Ascending aorta (tissue), 2 donors: ENCODE measurements at regions of chr2 and their contacts with region 1.

Region 1: DNA sequence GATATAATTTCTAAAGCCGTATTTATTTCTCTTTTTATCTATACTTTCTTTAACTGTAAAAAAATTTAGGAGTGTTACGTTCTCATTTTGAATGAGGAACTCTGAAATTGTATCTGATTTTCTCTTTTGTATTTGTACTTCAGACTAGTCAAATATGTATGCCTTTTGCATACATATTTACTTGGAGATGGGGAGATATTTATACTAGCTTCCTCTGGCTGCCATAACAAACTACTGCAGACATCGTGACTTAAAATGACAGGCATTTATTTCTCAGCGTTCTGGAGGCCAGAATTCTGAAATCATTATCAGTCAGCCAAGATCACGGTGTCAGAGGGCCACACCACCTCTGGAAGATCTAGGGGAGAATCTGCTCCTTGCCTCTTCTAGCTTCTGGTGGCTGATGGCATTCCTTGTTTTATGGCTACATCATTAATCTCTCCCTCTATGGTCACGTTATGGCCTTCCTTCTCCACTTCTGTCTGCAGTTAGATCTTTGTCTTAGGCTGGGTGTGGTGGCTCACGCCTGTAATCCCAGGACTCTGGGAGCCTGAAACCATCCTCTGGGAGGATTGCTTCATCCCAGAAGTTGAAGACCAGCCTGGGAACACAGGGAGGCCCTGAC is 8.2 kb downstream of the LCLAT1 start:
- DNase-seq: no peak
- H3K4me3 ChIP-seq: no peak overlapping the region
- H3K27ac ChIP-seq: no peak overlapping the region
- H3K4me1 ChIP-seq: no peaks in the 10 kb centered on the region
- H3K27me3 ChIP-seq: no peaks in the 10 kb centered on the region
- CTCF ChIP-seq: no peak

Region 2: GRCh38 chr2:30514848-30515435 is 59.7 kb after region 1 on chr2:
- intact Hi-C with region 1: no loop called
- DNase-seq: no peak
- H3K4me3 ChIP-seq: no peak overlapping the region
- H3K27ac ChIP-seq: no peak overlapping the region
- H3K4me1 ChIP-seq: no peaks in the 10 kb centered on the region
- H3K27me3 ChIP-seq: no peaks in the 10 kb centered on the region
- CTCF ChIP-seq: no peak

Region 3: GRCh38 chr2:30541680-30542079 is 86.5 kb after region 1 on chr2:
- intact Hi-C with region 1: loop called (anchors 5 kb)
- DNase-seq: no peak
- H3K4me3 ChIP-seq: no peak overlapping the region
- H3K27ac ChIP-seq: no peak overlapping the region
- H3K4me1 ChIP-seq: peaks cover 0 to 2% of the 10 kb centered on the region in 2 donors
- H3K27me3 ChIP-seq: no peaks in the 10 kb centered on the region
- CTCF ChIP-seq: no peak

Region 4: DNA sequence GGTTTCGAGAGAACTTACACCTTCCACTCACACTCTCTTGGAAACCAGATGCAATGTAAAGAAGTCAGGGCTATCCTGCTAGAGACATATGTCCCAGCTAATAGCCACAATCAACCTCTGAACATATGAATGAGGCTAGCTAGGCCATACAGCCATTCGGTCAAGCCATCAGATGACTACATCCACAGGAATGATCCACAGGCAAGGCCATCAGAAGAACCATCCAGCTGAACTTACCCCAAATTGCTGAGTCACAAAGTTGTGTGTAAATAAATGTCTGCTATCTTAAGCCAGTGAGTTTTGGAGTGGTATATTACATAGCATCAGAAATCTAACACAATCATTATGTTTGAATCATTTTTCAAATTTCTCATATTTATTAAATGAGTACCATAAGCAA is 1602.9 kb after region 1 on chr2:
- intact Hi-C with region 1: no loop called
- DNase-seq: no peak
- H3K4me3 ChIP-seq: no peak overlapping the region
- H3K27ac ChIP-seq: no peak overlapping the region
- H3K4me1 ChIP-seq: peaks cover 0 to 2% of the 10 kb centered on the region in 2 donors
- H3K27me3 ChIP-seq: no peaks in the 10 kb centered on the region
- CTCF ChIP-seq: no peak